Activated CD4-positive, alpha-beta T cell treated with anti-CD3 and anti-CD28 coated beads for 36 hours (primary cell): ENCODE measurements at regions of chr16 and their contacts with region 1.

Region 1: GRCh38 chr16:3023669-3024478 is at the starts of genes HCFC1R1 and THOC6:
- DNase-seq: peak; percentile 99
- ATAC-seq: peak; percentile 74
- H3K4me3 Mint-ChIP-seq: peak within 1 kb of the TSS; percentile 74
- H3K27ac Mint-ChIP-seq: peak within 1 kb of the TSS; percentile 97
- H3K4me1 Mint-ChIP-seq: peaks cover 50% of the 10 kb centered on the region
- H3K27me3 Mint-ChIP-seq: peaks cover 4% of the 10 kb centered on the region
- total RNA-seq, gene HCFC1R1: 30.0 to 30.7 TPM
- total RNA-seq, gene THOC6: 46.9 to 50.2 TPM

Region 2: DNA sequence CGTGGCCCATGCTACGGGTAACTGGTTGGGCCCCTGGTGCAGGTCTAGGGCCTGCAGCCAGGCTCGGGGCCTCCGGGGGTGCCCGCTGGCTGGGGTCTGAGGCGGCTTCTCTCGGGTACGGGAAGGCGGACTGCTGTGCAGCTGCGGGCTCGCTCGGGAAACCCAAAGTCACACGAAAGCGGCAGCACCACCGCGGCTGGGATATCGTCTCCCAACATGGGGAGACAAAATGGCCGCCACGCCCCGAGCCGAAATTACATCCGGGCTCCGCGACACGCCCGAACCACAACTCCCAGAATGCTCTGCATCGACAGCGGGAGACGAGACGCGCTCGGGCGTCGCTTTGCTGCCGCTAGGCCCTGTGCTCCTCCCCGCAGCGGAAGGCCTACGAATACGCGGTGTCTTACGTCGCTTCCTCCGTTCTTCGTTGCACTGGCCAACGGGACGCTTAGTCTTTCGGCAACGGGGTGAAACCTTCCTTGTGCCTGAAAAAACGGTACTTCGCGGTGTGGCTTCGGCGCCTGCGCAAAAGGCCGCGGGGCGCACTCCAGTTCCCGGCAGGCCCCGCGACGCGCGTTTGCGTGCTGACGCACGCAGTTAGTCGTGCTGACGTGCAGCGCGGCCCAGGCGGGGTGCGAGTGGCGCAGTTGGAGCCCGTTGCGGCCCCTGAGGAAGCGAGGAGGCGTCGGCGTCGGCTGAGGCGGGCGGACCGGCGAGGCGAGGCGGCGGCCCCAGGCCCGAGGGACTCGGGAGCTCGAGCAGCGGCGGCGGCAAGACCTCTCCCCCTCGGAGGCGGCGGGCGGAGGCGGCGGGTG is 271.6 kb before region 1 on chr16 and contains the start of gene SRRM2:
- CTCF ChIA-PET with region 1: no interaction called
- POLR2A ChIA-PET with region 1: no interaction called
- intact Hi-C with region 1: loop called in 1 of 2 experiments (anchors 1 kb)
- DNase-seq: peak; percentile 97
- ATAC-seq: peak; percentile 90
- H3K4me3 Mint-ChIP-seq: peak within 1 kb of the TSS; percentile 99
- H3K27ac Mint-ChIP-seq: peak within 1 kb of the TSS; percentile 98
- H3K4me1 Mint-ChIP-seq: peaks cover 45% of the 10 kb centered on the region
- H3K27me3 Mint-ChIP-seq: no peaks in the 10 kb centered on the region
- total RNA-seq, gene SRRM2: 517 to 598 TPM

Region 3: DNA sequence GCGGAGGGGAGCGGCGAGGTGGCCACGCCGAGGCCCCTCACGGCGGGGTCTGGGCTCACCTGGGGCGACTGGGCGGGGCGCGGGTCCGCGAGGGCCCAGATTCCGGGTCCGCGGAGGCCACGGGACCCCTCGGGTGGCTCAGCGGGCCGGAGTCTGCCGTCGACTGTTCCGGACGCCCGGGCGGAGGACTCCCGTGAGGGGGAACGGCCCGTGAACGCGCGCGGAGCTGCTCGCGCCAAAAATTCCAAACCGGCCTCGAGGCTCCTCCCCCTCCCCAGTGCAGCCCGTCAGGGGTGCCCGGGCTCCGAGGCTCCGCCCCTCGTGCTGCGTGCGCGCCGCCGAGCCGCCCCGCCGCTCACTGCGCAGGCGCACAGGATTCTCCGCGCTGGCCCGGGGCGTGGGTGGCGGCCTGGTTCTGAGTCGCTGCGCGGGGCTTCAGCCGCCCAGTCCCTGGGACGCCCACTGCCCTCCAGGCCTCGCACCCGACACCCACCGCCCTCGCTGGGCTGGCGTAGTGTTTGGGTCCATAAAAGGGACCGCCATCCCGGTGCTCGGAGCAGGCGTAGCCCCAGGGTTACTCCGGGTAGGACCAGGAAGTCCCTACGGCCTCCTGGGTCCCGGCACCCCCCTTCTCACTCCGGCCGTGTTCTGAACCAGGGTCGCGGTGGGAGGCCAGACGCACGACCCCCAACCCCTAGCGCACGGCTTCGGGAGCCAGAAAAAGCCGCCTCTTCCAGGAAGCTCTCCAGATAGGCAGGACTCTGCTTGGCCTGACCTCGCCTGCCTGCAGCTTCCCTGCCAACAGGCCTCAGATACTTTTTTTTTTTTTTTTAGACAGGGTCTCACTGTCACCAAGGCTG is 43.4 kb before region 1 on chr16 and contains the start of gene PKMYT1:
- CTCF ChIA-PET with region 1: interaction called, 5 read pairs
- POLR2A ChIA-PET with region 1: no interaction called
- intact Hi-C with region 1: loop called in 1 of 2 experiments (anchors 1 kb)
- DNase-seq: peak; percentile 97
- ATAC-seq: peak; percentile 91
- H3K4me3 Mint-ChIP-seq: peak within 1 kb of the TSS; percentile 87
- H3K27ac Mint-ChIP-seq: peak within 1 kb of the TSS; percentile 84
- H3K4me1 Mint-ChIP-seq: peaks cover 6% of the 10 kb centered on the region
- H3K27me3 Mint-ChIP-seq: peaks cover 2% of the 10 kb centered on the region
- total RNA-seq, gene PKMYT1: 101 to 117 TPM

Region 4: GRCh38 chr16:3065069-3065741 is 41.3 kb after region 1 on chr16 and contains the start of gene IL32:
- CTCF ChIA-PET with region 1: interaction called, 18 read pairs
- POLR2A ChIA-PET with region 1: interaction called, 7 read pairs
- intact Hi-C with region 1: no loop called
- DNase-seq: peak; percentile 90
- ATAC-seq: peak; percentile 62
- H3K4me3 Mint-ChIP-seq: peak within 1 kb of the TSS; percentile 100
- H3K27ac Mint-ChIP-seq: peak within 1 kb of the TSS; percentile 100
- H3K4me1 Mint-ChIP-seq: peaks cover 64% of the 10 kb centered on the region
- H3K27me3 Mint-ChIP-seq: no peaks in the 10 kb centered on the region
- total RNA-seq, gene IL32: 1,864 to 2,360 TPM

Region 5: DNA sequence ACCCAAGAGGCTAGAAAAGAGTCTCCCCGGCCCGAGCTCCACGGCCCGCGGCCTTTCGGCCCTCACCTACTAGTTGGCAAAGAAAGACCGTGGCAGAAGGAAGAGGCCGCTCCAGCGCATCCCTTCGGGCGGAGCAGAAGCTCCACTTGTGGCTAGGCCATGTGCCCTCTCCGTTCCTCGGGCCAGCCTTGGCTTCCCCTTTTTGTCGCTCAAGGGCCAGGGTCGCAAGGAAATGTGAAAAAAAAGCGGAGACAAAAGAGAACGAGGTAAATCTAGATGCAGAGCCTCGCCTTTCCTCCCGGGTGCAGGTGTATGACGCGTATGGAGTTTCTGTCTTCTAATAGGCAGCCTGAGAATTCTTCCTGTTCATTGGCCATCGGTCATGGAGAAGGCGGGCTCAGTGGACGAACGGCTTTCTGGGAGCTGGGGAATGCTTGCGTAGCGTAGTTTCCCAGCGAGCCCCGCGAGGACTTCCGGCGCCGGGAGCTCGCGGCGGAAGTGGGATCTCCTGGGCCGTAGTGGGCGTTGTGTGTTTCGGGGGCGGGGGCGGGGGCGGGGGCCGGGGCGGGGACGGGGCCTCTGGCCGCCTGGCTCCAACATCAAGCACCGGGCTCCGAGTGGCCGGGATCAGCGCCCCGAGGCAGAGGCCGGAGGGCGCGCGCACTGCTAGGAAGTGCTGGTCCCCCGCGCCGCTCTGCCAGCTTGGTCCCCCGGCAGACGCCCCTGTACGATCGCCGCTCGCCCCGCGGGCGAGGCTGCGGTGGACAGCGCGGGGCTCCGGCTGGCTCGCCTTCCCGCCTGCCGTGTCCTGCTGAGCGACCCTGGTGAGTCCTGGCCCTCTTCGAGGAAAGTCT is 110.9 kb after region 1 on chr16 and contains the start of gene ZNF213:
- CTCF ChIA-PET with region 1: interaction called, 104 read pairs
- POLR2A ChIA-PET with region 1: interaction called, 3 read pairs
- intact Hi-C with region 1: loop called in 1 of 2 experiments (anchors 2 kb)
- DNase-seq: peak; percentile 96
- ATAC-seq: peak; percentile 97
- H3K4me3 Mint-ChIP-seq: peak within 1 kb of the TSS; percentile 98
- H3K27ac Mint-ChIP-seq: peak within 1 kb of the TSS; percentile 95
- H3K4me1 Mint-ChIP-seq: peaks cover 30% of the 10 kb centered on the region
- H3K27me3 Mint-ChIP-seq: no peaks in the 10 kb centered on the region
- total RNA-seq, gene ZNF213: 7.6 to 8.3 TPM

Region 6: DNA sequence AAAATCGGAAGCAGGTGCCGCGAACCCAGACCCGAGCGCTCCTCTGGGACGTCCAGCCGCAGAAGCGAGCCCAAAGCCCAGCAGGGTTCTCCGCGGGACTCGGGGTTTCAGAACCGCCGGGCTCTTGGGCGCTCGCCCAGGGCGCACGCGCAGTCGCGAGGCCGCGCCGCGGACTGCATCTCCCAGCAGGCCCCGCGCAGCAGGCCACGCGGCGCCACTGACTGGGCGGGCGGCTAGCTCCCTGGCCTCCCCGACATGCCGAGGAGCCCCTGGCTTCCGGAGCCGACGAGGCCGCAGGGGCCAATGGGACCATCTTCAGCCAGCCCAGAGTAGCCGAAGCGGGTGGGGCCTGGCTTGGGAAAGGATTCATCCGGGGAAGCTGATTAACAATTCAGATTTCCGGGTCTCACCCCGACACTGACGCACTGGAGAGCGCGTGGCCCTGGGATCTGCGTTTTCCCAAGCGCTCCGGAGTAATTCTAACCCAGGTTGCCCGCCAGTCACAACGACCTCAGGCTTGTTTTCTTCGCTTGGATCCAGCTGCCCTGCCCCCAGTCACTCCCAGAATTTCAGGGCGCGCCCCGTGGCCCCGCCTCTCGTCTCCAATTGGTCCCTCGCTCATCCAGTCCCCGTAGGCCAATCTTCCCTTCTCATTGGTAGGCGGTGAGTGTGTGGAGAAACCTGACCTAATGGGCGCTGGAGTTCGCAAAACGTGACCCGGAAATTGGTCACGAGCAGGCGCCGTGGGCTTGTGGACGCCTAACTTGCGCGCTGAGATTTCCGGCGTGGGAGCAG is 259.1 kb after region 1 on chr16 and contains the start of gene ZNF263:
- CTCF ChIA-PET with region 1: no interaction called
- POLR2A ChIA-PET with region 1: no interaction called
- intact Hi-C with region 1: loop called in 1 of 2 experiments (anchors 1 kb)
- DNase-seq: peak; percentile 96
- ATAC-seq: peak; percentile 91
- H3K4me3 Mint-ChIP-seq: peak within 1 kb of the TSS; percentile 90
- H3K27ac Mint-ChIP-seq: peak within 1 kb of the TSS; percentile 97
- H3K4me1 Mint-ChIP-seq: peaks cover 24% of the 10 kb centered on the region
- H3K27me3 Mint-ChIP-seq: no peaks in the 10 kb centered on the region
- total RNA-seq, gene ZNF263: 19.2 to 19.6 TPM